K562 (cell line): ENCODE measurements at regions of chr4 and their contacts with region 1.

Region 1: DNA sequence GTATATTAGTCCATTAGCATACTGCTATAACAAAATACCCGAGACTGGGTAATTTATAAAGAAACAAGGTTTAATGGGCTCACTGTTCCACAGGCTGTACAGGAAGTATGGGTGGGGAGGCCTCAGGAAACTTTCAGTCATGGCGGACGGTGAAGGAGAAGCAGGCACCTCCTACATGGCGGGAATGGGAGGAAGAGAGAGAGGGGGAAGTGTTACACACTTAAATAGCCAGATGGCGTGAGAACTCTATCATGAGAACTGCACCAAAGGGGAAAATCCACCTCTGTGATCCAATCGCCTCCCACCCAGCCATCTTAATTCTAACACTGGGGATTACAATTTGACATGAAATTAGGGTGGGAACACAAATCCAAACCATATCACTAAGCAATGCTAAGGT is 98.9 kb upstream of the SH3RF1 start:
- DNase-seq: peak in 1 of 4 experiments; percentile 36
- ATAC-seq: peak; percentile 91
- H3K4me3 ChIP-seq: no peak overlapping the region
- H3K27ac ChIP-seq: no peak overlapping the region
- H3K4me1 ChIP-seq: no peaks in the 10 kb centered on the region
- H3K27me3 ChIP-seq: no peaks in the 10 kb centered on the region
- CTCF ChIP-seq: peak in 2 of 3 experiments; percentile 33 to 49; a peak in 3 of 6 replicates
- EP300 ChIP-seq: no peak
- POLR2A ChIP-seq: no peak
- RAD21 ChIP-seq: peak; percentile 17 to 54; a peak in 3 of 4 replicates

Region 2: DNA sequence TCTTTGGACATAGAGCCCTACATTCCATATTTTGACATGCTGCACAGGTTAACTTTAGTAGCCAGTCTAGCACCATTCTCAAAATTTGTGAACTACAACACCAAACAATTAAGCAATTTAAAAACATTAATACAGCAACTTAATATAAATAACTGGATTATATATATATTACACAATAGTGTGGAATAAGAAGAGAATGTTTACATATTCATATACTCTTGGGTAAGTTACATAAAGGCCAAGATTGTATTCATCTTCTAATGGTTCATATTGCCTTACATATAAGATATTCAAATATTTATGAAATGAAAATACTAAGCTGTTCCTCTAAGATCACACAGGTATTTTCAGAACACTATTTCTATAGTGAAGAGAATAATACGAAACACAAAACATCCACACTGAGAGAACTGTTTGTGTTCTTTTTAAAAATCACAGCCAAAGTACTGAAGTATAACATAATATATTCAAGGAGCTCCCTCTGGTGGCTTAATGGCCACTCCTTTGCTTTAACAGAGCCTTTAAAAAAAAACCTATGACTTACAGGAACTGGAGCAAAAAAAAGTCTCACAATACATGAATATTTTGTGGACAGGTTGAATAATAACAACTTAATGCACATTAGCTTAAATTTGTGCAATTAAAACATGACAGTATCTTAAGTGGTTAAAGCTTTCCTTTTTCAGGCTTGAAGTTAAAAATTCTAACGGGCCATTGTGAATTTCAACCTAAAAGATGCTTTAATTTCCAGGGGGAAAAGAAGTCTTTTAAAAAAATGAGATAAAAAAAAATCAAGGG is 196.6 kb after region 1 on chr4:
- CTCF ChIA-PET with region 1: no interaction called
- POLR2A ChIA-PET with region 1: no interaction called
- in situ Hi-C with region 1: no loop called
- intact Hi-C with region 1: loop called (anchors 5 kb)
- DNase-seq: peak; percentile 18 to 52 (median 21)
- ATAC-seq: peak; percentile 89
- H3K4me3 ChIP-seq: no peak overlapping the region
- H3K27ac ChIP-seq: no peak overlapping the region
- H3K4me1 ChIP-seq: no peaks in the 10 kb centered on the region
- H3K27me3 ChIP-seq: no peaks in the 10 kb centered on the region
- CTCF ChIP-seq: peak; percentile 37 to 70 (median 48); a peak in 4 of 6 replicates
- EP300 ChIP-seq: no peak
- POLR2A ChIP-seq: no peak
- RAD21 ChIP-seq: peak; percentile 56 to 58